Naive thymus-derived CD4-positive, alpha-beta T cell (primary cell): ENCODE measurements at regions of chr16 and their contacts with region 1.

Region 1: GRCh38 chr16:89217388-89218191 is at the start of gene ZNF778:
- DNase-seq: peak; percentile 77 to 86 (median 84)
- ATAC-seq: peak; percentile 88
- H3K4me3 ChIP-seq: peak within 1 kb of the TSS; percentile 56
- H3K4me3 Mint-ChIP-seq: peak within 1 kb of the TSS; percentile 68 to 96 (median 92)
- H3K27ac ChIP-seq: peak within 1 kb of the TSS; percentile 99
- H3K27ac Mint-ChIP-seq: peak within 1 kb of the TSS; percentile 68 to 99 (median 86)
- H3K4me1 ChIP-seq: peaks cover 5 to 10% of the 10 kb centered on the region in 2 donors
- H3K4me1 Mint-ChIP-seq: peaks cover 12 to 39% (median 29%) of the 10 kb centered on the region in 7 donors
- H3K27me3 ChIP-seq: no peaks in the 10 kb centered on the region
- H3K27me3 Mint-ChIP-seq: no peaks in the 10 kb centered on the region
- total RNA-seq, gene ZNF778: 6.0 to 13.5 (median 6.5) TPM

Region 2: GRCh38 chr16:88442727-88443576 is 774.6 kb before region 1 on chr16:
- CTCF ChIA-PET with region 1: no interaction called
- POLR2A ChIA-PET with region 1: no interaction called
- intact Hi-C with region 1: loop called in 1 of 2 experiments (anchors 5 kb)
- DNase-seq: peak; percentile 61 to 91 (median 80)
- ATAC-seq: peak; percentile 88
- H3K4me3 ChIP-seq: no peak overlapping the region
- H3K4me3 Mint-ChIP-seq: peak overlapping the region in 2 of 10 donors; percentile 43 to 68
- H3K27ac ChIP-seq: no peak overlapping the region
- H3K27ac Mint-ChIP-seq: peak overlapping the region in 1 of 9 donors; percentile 43
- H3K4me1 ChIP-seq: peaks cover 4% of the 10 kb centered on the region in 2 donors
- H3K4me1 Mint-ChIP-seq: peaks cover 0 to 3% (median 0%) of the 10 kb centered on the region in 7 donors
- H3K27me3 ChIP-seq: no peaks in the 10 kb centered on the region
- H3K27me3 Mint-ChIP-seq: peaks cover 0 to 6% (median 0%) of the 10 kb centered on the region in 5 donors

Region 3: DNA sequence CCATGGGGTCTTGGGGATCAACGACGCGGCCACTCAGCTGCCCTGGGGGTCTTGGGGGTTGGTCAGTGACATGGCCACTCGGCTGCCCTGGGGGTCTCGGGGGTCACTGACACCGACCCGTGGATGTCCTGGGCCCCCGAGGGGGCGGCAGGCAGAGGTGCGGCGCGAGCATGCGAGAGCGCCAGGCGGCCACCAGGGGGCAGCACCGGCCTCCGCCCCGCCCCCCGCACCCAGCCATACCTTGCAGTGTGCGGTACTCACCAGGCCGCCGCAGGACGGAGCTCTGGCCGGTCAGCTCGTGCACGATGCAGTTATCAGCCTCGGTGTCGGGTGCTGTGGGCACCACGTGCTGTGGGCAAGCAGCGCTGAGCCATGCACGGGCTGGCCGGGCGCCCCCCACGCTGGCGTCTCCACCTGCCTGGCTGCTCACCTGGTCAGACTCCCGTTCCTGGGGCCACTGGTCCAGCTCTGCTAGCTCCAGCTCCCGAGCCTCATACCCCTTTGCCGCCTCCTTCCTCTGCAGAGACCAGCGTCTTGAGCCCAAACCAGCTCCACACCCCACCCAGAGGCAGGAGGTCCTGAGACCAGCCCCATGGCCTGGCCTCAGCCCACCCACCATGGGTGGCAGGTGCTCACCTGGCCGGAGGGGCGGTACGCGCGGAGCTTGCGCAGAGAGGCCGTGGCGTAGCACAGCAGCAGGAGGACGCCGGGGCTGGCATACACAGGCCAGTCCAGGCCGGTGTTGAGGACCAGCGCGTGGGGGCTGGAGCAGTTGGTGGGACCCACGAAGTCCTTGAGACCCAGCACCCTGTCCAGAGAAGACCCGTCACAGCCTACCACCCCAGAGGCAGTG is 480.1 kb before region 1 on chr16:
- CTCF ChIA-PET with region 1: interaction called, 4 read pairs
- POLR2A ChIA-PET with region 1: no interaction called
- intact Hi-C with region 1: loop called in 1 of 2 experiments (anchors 2 kb)
- DNase-seq: peak; percentile 55 to 81 (median 65)
- ATAC-seq: peak; percentile 95
- H3K4me3 ChIP-seq: no peak overlapping the region
- H3K4me3 Mint-ChIP-seq: peak overlapping the region in 1 of 10 donors; percentile 34
- H3K27ac ChIP-seq: no peak overlapping the region
- H3K27ac Mint-ChIP-seq: no peak overlapping the region
- H3K4me1 ChIP-seq: peaks cover 3 to 5% of the 10 kb centered on the region in 2 donors
- H3K4me1 Mint-ChIP-seq: peaks cover 0 to 8% (median 0%) of the 10 kb centered on the region in 7 donors
- H3K27me3 ChIP-seq: no peaks in the 10 kb centered on the region
- H3K27me3 Mint-ChIP-seq: no peaks in the 10 kb centered on the region

Region 4: DNA sequence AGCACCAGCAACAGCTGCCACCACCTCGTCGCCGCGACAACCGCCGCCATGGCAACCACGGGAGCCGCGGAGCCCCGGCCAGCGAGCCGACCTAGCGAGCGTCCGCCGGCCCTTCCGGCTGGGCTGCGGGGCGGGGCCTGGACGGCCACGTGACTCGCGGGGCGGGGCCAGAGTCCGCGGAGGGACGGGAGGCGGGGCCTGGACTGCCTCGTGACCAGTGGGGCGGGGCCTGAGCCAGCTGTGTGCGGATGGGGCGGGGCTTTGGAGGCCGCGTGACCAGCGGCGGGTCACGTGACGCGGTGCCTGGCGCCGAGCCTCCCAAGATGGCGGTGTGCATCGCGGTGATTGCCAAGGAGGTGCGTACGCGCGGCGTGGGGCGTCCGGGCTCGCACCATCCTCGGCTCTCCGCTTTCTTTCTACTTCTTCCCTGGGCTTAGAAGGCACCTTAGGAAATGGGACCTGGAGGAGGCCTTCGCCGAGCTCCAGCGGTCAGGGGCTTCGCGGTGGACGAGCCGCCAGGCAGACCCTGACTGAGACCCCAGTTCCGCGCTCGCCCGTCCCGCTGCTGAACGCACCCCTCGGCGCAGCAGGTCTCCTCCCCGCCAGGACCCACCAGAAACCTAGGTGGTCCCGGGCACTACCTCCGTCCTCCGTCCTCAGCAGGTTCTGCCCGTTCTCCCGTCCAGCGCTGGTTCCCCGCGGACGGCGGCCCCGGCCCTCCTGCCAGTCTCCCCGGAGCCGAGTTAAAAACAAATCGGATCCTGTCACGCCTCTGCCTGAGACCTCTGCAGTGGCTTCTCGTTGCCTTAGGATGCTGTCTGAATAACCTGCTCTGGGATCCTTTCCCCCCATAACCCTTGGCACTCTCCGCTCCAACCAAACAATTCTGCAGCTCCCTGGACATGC is 360.5 kb before region 1 on chr16 and contains the starts of genes GALNS and TRAPPC2L:
- CTCF ChIA-PET with region 1: no interaction called
- POLR2A ChIA-PET with region 1: interaction called, 13 read pairs
- intact Hi-C with region 1: loop called (anchors 1 to 2 kb)
- DNase-seq: peak; percentile 95 to 100 (median 98)
- ATAC-seq: peak; percentile 95
- H3K4me3 ChIP-seq: peak within 1 kb of the TSS; percentile 98
- H3K4me3 Mint-ChIP-seq: peak within 1 kb of the TSS; percentile 94 to 100 (median 98)
- H3K27ac ChIP-seq: peak within 1 kb of the TSS; percentile 71
- H3K27ac Mint-ChIP-seq: peak within 1 kb of the TSS; percentile 88 to 100 (median 94)
- H3K4me1 ChIP-seq: peaks cover 20 to 25% of the 10 kb centered on the region in 2 donors
- H3K4me1 Mint-ChIP-seq: peaks cover 24 to 46% (median 41%) of the 10 kb centered on the region in 7 donors
- H3K27me3 ChIP-seq: no peaks in the 10 kb centered on the region
- H3K27me3 Mint-ChIP-seq: no peaks in the 10 kb centered on the region
- total RNA-seq, gene GALNS: 48.6 to 64.3 (median 57.5) TPM
- total RNA-seq, gene TRAPPC2L: 32.3 to 73.4 (median 60.1) TPM

Region 5: DNA sequence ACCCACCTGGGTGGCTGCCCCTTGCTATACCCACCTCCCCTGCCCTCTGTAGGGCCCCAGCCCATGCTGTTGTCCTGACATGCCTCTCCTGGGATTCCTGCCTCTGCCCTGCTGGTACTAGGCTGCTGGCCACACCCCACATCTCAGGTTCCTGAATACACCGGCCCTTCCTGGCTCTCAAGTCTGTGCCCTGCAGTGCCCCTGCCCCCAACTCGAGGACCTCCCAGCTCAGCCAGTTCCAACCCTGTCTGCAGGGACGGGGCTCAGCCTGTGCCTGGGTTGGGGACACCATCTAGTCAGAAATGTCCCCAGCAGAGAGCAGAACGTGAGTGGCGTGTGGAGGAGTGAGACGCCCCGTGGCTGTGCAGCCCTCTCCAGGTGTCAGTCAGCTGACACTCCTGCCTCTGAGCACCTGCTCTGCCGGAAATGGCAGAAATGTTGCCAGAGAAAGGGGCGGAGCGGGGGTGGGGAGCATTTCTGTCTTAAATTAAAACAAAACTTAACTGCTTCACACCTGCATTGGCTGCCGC is 95.2 kb before region 1 on chr16:
- CTCF ChIA-PET with region 1: interaction called, 12 read pairs
- POLR2A ChIA-PET with region 1: interaction called, 5 read pairs
- intact Hi-C with region 1: loop called in 1 of 2 experiments (anchors 1 kb)
- DNase-seq: peak in 8 of 9 donors; percentile 42 to 91 (median 88)
- ATAC-seq: peak; percentile 94
- H3K4me3 ChIP-seq: peak overlapping the region; percentile 55
- H3K4me3 Mint-ChIP-seq: peak overlapping the region in 9 of 10 donors; percentile 65 to 78 (median 72)
- H3K27ac ChIP-seq: peak overlapping the region; percentile 66
- H3K27ac Mint-ChIP-seq: peak overlapping the region; percentile 55 to 99 (median 94)
- H3K4me1 ChIP-seq: peaks cover 3 to 30% of the 10 kb centered on the region in 2 donors
- H3K4me1 Mint-ChIP-seq: peaks cover 11 to 76% (median 46%) of the 10 kb centered on the region in 7 donors
- H3K27me3 ChIP-seq: no peaks in the 10 kb centered on the region
- H3K27me3 Mint-ChIP-seq: no peaks in the 10 kb centered on the region

Region 6: DNA sequence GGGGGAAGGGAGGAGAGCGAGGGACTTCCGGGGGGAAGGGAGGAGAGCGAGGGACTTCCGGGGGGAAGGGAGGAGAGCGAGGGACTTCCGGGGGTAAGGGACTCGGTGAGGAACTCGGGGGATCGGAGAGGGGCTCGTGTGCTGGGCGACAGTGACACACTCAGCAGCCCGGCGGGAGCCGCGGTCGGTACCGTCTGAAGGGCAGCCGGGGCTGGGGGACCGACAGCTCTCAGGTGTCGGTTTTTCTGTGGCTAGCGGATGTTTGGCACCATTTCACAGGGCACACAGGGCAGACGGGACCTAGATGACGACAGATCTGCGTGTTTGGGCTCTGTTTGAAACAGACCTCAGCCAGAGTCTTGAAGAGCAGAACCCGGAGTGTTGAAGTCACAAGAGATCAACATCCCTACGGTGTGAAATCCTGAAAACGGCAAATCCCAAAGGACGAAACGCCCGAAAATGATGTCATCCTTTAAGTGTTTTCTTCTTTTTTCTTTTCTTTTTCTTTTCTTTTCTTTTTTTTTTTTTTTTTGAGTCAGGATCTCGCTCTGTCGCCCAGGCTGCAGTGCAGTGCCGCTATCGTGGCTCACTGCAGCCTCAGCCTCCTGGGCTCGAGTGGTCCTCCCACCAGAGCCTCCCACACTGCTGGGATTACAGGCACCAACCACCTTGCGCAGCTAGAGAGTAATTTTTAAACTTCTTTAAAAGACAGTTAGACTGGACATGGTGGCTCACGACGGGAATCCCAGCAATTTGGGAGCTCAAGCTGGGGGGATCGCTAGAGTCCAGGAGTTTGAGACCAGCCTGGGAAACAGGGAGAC is 23.8 kb after region 1 on chr16:
- CTCF ChIA-PET with region 1: interaction called, 4 read pairs
- POLR2A ChIA-PET with region 1: interaction called, 9 read pairs
- intact Hi-C with region 1: loop called (anchors 1 kb)
- DNase-seq: peak; percentile 75 to 95 (median 93)
- ATAC-seq: peak; percentile 86
- H3K4me3 ChIP-seq: peak overlapping the region; percentile 68
- H3K4me3 Mint-ChIP-seq: peak overlapping the region; percentile 83 to 100 (median 96)
- H3K27ac ChIP-seq: peak overlapping the region; percentile 91
- H3K27ac Mint-ChIP-seq: peak overlapping the region; percentile 94 to 100 (median 99)
- H3K4me1 ChIP-seq: peaks cover 5 to 6% of the 10 kb centered on the region in 2 donors
- H3K4me1 Mint-ChIP-seq: peaks cover 0 to 31% (median 18%) of the 10 kb centered on the region in 7 donors
- H3K27me3 ChIP-seq: no peaks in the 10 kb centered on the region
- H3K27me3 Mint-ChIP-seq: no peaks in the 10 kb centered on the region